ENCODE measurements at regions of chr4 and their contacts with region 1.

Region 1: GRCh38 chr4:51895813-51896408 is 53.0 kb downstream of the DCUN1D4 start:
- DNase-seq: peak; percentile 67
- ATAC-seq: peak; percentile 93
- H3K4me3 ChIP-seq: no peak overlapping the region
- H3K27ac ChIP-seq: no peak overlapping the region; the same call in 1 of the 2 replicates
- H3K4me1 ChIP-seq: peaks cover 4% of the 10 kb centered on the region; the same call in 1 of the 2 replicates
- H3K27me3 ChIP-seq: no peaks in the 10 kb centered on the region
- CTCF ChIP-seq: peak; percentile 69
- POLR2A ChIP-seq: no peak
- RAD21 ChIP-seq: peak; percentile 50

Region 2: GRCh38 chr4:51842554-51843308 is 53.2 kb before region 1 on chr4 and contains the start of gene DCUN1D4:
- CTCF ChIA-PET with region 1: no interaction called
- POLR2A ChIA-PET with region 1: interaction called, 13 read pairs
- dilution Hi-C with region 1: no loop called
- in situ Hi-C with region 1: no loop called
- intact Hi-C with region 1: no loop called
- DNase-seq: peak; percentile 99
- ATAC-seq: peak; percentile 91
- H3K4me3 ChIP-seq: peak within 1 kb of the TSS; percentile 80
- H3K27ac ChIP-seq: peak within 1 kb of the TSS; percentile 96
- H3K4me1 ChIP-seq: peaks cover 1% of the 10 kb centered on the region; the same call in 1 of the 2 replicates
- H3K27me3 ChIP-seq: no peaks in the 10 kb centered on the region
- CTCF ChIP-seq: peak; percentile 59
- POLR2A ChIP-seq: peak; percentile 46; the same call in 1 of the 2 replicates
- RAD21 ChIP-seq: no peak
- total RNA-seq, gene DCUN1D4: 37.8 and 44.3 TPM in 2 replicates

Region 3: DNA sequence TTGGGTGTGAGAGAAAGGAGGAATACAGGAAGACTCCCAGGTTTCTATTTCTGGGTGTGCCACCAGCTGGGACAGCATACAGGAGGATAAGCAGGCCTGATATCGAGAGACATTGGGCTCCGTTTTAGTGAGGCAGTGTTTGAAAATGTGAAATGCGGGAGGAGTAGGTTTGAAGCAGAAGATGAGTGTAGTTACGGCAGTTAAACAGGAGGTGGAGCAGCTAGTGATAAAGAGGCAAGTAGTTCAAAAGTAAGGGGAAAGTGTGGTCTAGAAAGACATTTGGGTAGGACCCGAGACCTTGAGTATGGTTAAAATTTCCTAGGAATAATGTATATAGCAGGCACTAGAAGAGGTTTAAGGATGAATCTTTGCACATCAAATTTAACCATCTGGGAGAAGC is 10.5 kb before region 1 on chr4:
- CTCF ChIA-PET with region 1: no interaction called
- POLR2A ChIA-PET with region 1: no interaction called
- dilution Hi-C with region 1: no loop called
- in situ Hi-C with region 1: no loop called
- intact Hi-C with region 1: no loop called
- DNase-seq: peak; percentile 28
- ATAC-seq: peak; percentile 69
- H3K4me3 ChIP-seq: no peak overlapping the region
- H3K27ac ChIP-seq: no peak overlapping the region
- H3K4me1 ChIP-seq: no peaks in the 10 kb centered on the region
- H3K27me3 ChIP-seq: no peaks in the 10 kb centered on the region
- CTCF ChIP-seq: peak; percentile 31; the same call in 1 of the 2 replicates
- POLR2A ChIP-seq: no peak
- RAD21 ChIP-seq: peak; percentile 26; the same call in 1 of the 2 replicates

Region 4: GRCh38 chr4:52028969-52029368 is 133.1 kb after region 1 on chr4:
- CTCF ChIA-PET with region 1: interaction called, 4 read pairs
- POLR2A ChIA-PET with region 1: interaction called, 3 read pairs
- dilution Hi-C with region 1: no loop called
- in situ Hi-C with region 1: loop called (anchors 10 kb)
- intact Hi-C with region 1: loop called (anchors 2 kb)
- DNase-seq: peak; percentile 79
- ATAC-seq: peak; percentile 94
- H3K4me3 ChIP-seq: no peak overlapping the region
- H3K27ac ChIP-seq: no peak overlapping the region
- H3K4me1 ChIP-seq: 0 out of 2 replicates have a peak, but pooled peaks cover 1% of the 10 kb centered on the region
- H3K27me3 ChIP-seq: no peaks in the 10 kb centered on the region
- CTCF ChIP-seq: no peak
- POLR2A ChIP-seq: no peak
- RAD21 ChIP-seq: no peak

Region 5: DNA sequence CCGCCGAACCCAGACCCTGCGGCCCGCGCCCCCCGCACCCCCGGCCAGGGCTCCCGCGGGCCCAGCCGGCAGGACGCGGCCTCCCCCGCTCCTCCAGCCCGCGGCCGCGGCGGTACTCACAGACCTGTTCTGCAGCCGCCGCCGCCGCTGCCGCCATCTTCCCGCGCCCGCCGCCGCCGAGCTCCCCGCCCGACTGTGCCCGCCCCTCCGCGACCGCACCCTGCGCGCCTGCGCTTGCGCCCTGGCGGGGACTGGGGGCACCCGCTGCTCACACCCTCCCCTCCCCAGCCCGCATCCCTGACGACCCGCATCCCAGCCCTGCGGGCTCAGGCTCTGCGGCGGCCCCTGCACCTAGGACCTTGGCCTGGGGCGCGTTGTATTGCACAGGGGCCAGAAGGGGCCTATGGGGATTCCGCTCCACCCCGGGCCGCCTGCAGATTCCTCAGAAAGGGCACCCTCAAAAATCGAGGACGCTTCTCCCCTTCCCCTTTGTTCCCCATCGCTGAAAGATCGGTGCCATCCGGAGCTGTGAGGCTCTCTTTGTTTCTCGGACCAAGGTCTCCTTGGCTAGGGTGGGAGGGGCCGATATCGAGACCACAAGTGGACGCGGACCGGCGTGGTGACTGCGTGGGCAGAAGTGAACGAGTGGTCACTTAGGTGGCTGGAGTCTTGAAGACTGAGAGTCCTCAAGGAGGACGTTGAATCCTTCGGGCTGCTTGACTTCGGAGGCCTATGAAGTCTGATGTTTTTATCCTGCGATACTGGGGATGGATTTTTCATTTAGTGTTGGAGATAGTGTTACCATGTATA is 142.4 kb after region 1 on chr4 and contains the start of gene SGCB:
- CTCF ChIA-PET with region 1: no interaction called
- POLR2A ChIA-PET with region 1: no interaction called
- dilution Hi-C with region 1: no loop called
- in situ Hi-C with region 1: loop called (anchors 10 kb)
- intact Hi-C with region 1: no loop called
- DNase-seq: peak; percentile 31
- ATAC-seq: peak; percentile 98
- H3K4me3 ChIP-seq: peak within 1 kb of the TSS; percentile 98
- H3K27ac ChIP-seq: peak within 1 kb of the TSS; percentile 92
- H3K4me1 ChIP-seq: 0 out of 2 replicates have a peak, but pooled peaks cover 3% of the 10 kb centered on the region
- H3K27me3 ChIP-seq: peaks cover 17% of the 10 kb centered on the region
- CTCF ChIP-seq: no peak
- POLR2A ChIP-seq: no peak
- RAD21 ChIP-seq: no peak
- total RNA-seq, gene SGCB: 16.3 and 25.8 TPM in 2 replicates

Region 6: DNA sequence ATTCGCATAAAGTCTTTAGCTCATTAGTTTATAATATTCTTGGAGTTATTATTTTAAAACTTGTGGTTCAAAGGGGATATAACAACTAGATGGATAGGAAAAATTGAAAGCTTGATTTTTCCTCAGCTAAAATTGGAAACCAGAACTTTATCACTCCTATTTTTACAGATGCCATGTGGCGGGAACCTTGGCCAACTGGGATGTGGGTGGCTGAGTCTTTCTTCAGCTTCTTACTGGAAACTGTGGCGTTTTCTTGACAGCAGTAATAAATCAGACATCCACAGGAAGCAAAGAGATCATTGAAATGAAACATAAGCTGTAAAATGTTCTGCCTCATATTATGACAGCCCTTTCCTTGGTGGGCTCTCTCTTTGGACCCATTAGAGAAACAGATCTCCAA is 239.3 kb after region 1 on chr4:
- CTCF ChIA-PET with region 1: no interaction called
- POLR2A ChIA-PET with region 1: interaction called, 3 read pairs
- dilution Hi-C with region 1: no loop called
- in situ Hi-C with region 1: no loop called
- intact Hi-C with region 1: loop called (anchors 5 kb)
- DNase-seq: no peak
- ATAC-seq: no peak
- H3K4me3 ChIP-seq: no peak overlapping the region
- H3K27ac ChIP-seq: no peak overlapping the region
- H3K4me1 ChIP-seq: no peaks in the 10 kb centered on the region
- H3K27me3 ChIP-seq: 0 out of 2 replicates have a peak, but pooled peaks cover 1% of the 10 kb centered on the region
- CTCF ChIP-seq: no peak
- POLR2A ChIP-seq: no peak
- RAD21 ChIP-seq: no peak

Region 7: DNA sequence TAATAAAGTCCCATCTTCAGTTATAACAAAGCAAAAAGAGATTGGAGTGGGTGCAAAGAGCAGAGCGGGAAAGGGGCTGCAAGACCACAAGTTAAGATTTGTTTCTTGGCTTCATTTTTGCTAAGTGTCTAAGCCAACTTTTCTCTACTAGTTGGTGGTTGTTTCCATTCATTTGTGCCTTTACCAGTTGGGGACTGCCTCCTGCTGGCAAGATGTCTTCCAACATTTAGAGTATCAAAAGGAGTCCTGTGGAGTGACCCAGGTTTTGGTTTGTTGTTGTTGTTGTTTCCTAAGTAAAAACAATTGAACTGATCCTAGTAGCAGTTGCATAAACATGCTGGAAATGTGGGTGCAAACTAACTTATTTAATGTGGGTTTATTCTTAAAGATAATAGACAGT is 276.3 kb after region 1 on chr4:
- CTCF ChIA-PET with region 1: no interaction called
- POLR2A ChIA-PET with region 1: no interaction called
- dilution Hi-C with region 1: no loop called
- in situ Hi-C with region 1: no loop called
- intact Hi-C with region 1: loop called (anchors 1 kb)
- DNase-seq: no peak
- ATAC-seq: no peak
- H3K4me3 ChIP-seq: no peak overlapping the region
- H3K27ac ChIP-seq: no peak overlapping the region
- H3K4me1 ChIP-seq: no peaks in the 10 kb centered on the region
- H3K27me3 ChIP-seq: no peaks in the 10 kb centered on the region
- CTCF ChIP-seq: peak; percentile 36
- POLR2A ChIP-seq: no peak
- RAD21 ChIP-seq: peak; percentile 47